HCT116 (cell line): ENCODE measurements at regions of chrX and their contacts with region 1.

Region 1: DNA sequence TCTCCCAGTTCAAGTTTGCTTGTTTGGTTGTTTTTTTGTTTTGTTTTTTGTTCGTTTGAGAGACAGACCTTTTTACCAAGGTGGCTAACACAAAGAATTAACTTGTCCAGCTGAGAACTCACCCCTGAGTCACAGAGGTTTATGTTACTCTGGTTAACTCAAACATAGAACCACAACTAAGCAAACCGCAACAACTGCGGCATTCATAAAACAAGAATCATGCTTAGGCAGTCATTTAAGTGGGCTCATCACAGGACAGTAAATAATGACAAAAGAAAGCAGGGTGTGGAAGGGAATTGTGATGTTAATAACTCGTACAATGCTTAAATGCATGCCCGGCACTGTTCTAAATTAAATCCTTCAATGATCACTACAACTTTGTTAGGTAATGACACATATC is 24.7 kb upstream of the IL13RA1 start:
- DNase-seq: peak; percentile 49
- ATAC-seq: peak; percentile 70
- H3K4me3 ChIP-seq: no peak overlapping the region
- H3K27ac ChIP-seq: no peak overlapping the region
- H3K4me1 ChIP-seq: peaks cover 0 to 8% of the 10 kb centered on the region in 2 experiments; a peak in 2 of 4 replicates
- H3K27me3 ChIP-seq: no peaks in the 10 kb centered on the region; the same call in 1 of the 2 replicates
- CTCF ChIP-seq: no peak
- POLR2A ChIP-seq: no peak
- RAD21 ChIP-seq: no peak

Region 2: DNA sequence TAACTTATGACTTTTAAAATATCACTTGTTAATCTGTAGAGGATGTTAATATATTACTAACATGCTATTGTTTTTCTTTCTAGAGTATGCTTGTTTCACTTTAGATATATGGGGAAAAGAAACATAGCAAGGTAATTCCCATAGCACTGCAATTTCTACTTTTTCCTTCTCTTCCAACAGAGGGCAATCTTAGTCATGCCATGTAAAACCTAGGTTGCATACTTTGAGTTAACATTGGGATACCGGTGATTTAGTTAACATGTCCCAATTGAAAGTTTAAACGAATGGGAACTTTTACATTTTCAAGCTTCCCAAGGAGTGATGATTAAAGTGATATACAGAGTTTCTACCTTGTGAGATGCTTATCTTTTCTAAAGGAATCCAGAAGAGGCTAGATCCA is 64.7 kb before region 1 on chrX:
- CTCF ChIA-PET with region 1: no interaction called
- POLR2A ChIA-PET with region 1: no interaction called
- RAD21 ChIA-PET with region 1: no interaction called
- intact Hi-C with region 1: loop called (anchors 10 kb)
- DNase-seq: no peak
- ATAC-seq: peak; percentile 55
- H3K4me3 ChIP-seq: no peak overlapping the region
- H3K27ac ChIP-seq: no peak overlapping the region
- H3K4me1 ChIP-seq: no peaks in the 10 kb centered on the region
- H3K27me3 ChIP-seq: no peaks in the 10 kb centered on the region
- CTCF ChIP-seq: peak; percentile 17 to 32 (median 25); a peak in 2 of 6 replicates
- POLR2A ChIP-seq: no peak
- RAD21 ChIP-seq: peak; percentile 50